Heart right ventricle (tissue), 16 donors: ENCODE measurements at regions of chr1 and their contacts with region 1.

Region 1: GRCh38 chr1:100921109-100921706 is 25.3 kb downstream of the SLC30A7 start:
- DNase-seq: peak in 1 of 2 donors; percentile 11
- ATAC-seq: no peak
- H3K4me3 ChIP-seq: no peak overlapping the region
- H3K27ac ChIP-seq: no peak overlapping the region
- H3K4me1 ChIP-seq: peaks cover 0 to 3% (median 0%) of the 10 kb centered on the region in 9 donors
- H3K27me3 ChIP-seq: no peaks in the 10 kb centered on the region
- CTCF ChIP-seq: peak; percentile 30 to 82 (median 77)

Region 2: GRCh38 chr1:100750005-100750885 is 171.0 kb before region 1 on chr1:
- intact Hi-C with region 1: no loop called
- DNase-seq: no peak
- ATAC-seq: no peak
- H3K4me3 ChIP-seq: no peak overlapping the region
- H3K27ac ChIP-seq: no peak overlapping the region
- H3K4me1 ChIP-seq: no peaks in the 10 kb centered on the region
- H3K27me3 ChIP-seq: no peaks in the 10 kb centered on the region
- CTCF ChIP-seq: no peak

Region 3: DNA sequence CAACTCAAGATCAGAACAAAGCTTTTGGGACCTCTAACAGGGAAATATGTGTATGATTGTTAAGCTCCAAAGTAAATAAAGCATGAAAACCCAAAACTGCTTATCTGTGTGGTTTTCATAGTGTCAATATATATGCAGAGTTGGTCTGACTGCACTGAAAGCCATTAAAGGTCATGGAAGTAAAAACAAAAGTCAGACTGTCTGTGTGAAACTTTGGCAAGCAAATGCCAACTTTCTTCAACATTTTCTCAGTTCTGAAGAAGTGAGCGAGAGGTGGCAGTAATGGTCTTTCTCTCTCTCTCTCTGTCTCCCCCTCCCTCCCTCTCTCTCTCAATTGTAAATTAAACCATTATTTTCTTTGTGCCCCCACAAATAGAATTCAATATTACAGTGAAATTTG is 215.5 kb after region 1 on chr1:
- intact Hi-C with region 1: loop called in 2 of 10 experiments (anchors 10 kb)
- DNase-seq: peak in 1 of 2 donors; percentile 25
- ATAC-seq: peak in 7 of 8 donors; percentile 53 to 80 (median 69)
- H3K4me3 ChIP-seq: no peak overlapping the region
- H3K27ac ChIP-seq: peak overlapping the region in 5 of 10 donors; percentile 2 to 50 (median 5)
- H3K4me1 ChIP-seq: peaks cover 0 to 37% (median 29%) of the 10 kb centered on the region in 9 donors
- H3K27me3 ChIP-seq: no peaks in the 10 kb centered on the region
- CTCF ChIP-seq: peak in 6 of 9 donors; percentile 34 to 63 (median 54)

Region 4: GRCh38 chr1:101357444-101357986 is 436.3 kb after region 1 on chr1:
- intact Hi-C with region 1: loop called in 8 of 10 experiments (anchors 2 to 10 kb)
- DNase-seq: peak in 1 of 2 donors; percentile 77
- ATAC-seq: peak; percentile 78 to 90 (median 82)
- H3K4me3 ChIP-seq: no peak overlapping the region
- H3K27ac ChIP-seq: no peak overlapping the region
- H3K4me1 ChIP-seq: no peaks in the 10 kb centered on the region
- H3K27me3 ChIP-seq: peaks cover 0 to 26% (median 0%) of the 10 kb centered on the region in 7 donors
- CTCF ChIP-seq: peak; percentile 76 to 91 (median 85)